Sciatic nerve (tissue), 2 donors: ENCODE measurements at regions of chr5 and their contacts with region 1.

Region 1: GRCh38 chr5:132500931-132501630 is 10.5 kb upstream of the IRF1 start:
- DNase-seq: no peak
- ATAC-seq: peak; percentile 31

Region 2: DNA sequence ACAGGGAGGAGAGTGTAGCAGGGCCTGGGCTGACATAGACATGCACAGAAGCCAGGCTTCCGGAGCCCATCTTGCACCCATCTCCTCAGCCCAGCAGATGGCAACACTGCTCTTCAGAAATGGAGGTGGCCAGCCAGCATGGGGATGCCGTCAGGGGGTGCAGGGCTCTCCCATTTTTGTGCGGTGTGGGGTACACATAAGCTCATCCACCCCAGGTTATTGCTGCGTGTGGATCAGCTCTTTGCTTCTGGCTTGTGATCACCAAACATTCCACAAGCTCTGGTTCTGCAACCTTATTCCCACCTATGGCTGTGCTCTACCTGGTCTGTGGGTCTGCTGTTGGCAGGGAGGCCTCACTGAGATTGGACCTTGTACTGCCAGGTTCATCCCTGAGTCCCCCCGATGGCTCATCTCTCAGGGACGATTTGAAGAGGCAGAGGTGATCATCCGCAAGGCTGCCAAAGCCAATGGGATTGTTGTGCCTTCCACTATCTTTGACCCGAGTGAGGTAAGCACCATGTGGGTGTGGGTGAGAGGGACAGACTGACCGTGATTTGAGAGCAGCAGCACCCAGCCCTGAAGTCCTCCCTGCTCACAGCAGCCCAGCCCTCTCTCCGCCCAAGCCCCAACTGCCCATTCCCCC is 114.3 kb before region 1 on chr5:
- intact Hi-C with region 1: loop called (anchors 1 kb)
- DNase-seq: peak; percentile 80
- ATAC-seq: peak; percentile 85

Region 3: DNA sequence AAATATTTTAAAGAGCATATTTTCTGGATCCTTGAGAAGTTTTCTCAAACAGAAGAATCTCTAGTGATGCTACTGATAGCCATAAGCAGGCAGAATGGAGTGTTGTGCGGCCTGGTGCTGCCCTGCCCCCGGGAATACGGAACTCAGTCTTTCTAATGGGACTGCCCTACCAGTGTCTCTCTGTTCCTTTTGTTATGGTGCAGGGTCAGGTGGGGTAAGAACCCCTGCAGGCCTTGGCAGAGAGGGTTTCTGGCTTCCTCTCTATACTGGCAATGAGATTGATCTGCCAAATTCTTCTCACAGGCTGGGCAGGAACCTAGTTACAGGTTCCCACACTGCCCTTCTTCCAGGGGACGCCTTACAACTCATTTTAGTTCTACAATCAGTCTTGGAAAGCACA is 39.7 kb after region 1 on chr5:
- intact Hi-C with region 1: no loop called
- DNase-seq: no peak
- ATAC-seq: no peak

Region 4: DNA sequence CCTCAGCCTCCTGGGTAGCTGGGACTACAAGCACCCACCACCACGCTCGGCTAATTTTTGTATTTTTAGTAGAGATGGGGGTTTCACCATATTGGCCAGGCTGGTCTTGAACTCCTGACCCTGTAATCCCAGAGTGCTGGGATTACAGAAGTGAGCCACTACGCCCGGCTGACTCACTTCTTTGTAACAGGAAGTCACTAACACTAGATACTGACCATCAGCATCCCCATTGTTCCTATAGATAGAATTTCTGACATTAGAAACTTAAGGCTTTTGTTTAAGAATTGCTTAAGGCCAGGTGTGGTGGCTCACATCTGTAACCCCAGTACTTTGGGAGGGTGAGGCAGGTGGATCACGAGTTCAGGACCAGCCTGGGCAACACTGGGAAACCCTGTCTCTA is 414.6 kb after region 1 on chr5:
- intact Hi-C with region 1: no loop called
- DNase-seq: no peak
- ATAC-seq: no peak